GM13976 (cell line): ENCODE measurements at regions of chr14 and their contacts with region 1.

Region 1: DNA sequence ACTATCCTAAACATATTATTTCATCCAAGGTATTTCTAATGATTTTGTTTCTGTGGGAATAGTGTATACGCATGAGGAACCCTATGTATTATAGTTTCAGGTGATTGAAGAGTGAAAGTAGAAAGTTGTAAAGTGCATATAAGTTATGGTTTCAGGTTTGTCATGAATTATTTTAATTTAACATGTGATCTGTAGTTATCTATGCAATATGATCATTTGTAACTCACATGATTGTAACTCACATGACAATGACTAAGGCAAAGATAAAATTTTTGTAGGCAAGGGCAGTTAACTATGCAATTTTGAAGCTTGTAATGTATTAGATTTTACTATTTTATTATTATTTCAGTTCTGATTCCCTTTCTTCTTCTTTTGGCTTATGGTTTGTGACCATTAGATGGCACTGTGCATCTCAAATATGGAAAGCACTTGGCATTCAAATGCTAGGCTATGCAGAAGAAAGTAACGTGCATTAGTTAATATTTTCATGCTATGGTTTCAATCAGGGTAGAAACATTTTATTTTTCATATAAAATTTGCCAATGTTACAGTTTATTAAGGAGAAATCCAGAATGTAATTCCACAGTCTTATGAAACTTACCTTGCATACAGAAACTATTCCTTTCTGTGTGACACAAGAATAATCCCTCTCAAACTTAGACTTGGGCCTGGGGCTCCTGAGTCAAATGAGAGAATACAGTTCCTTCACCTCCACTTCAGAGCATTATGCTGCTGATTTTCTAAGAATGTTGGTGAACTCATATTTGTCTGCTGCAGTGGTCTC is 15.8 kb upstream of the TMEM30B start:
- DNase-seq: peak; percentile 54
- CTCF ChIP-seq: peak; percentile 45

Region 2: GRCh38 chr14:61003571-61003970 is 293.3 kb before region 1 on chr14:
- in situ Hi-C with region 1: no loop called
- DNase-seq: no peak
- CTCF ChIP-seq: no peak

Region 3: DNA sequence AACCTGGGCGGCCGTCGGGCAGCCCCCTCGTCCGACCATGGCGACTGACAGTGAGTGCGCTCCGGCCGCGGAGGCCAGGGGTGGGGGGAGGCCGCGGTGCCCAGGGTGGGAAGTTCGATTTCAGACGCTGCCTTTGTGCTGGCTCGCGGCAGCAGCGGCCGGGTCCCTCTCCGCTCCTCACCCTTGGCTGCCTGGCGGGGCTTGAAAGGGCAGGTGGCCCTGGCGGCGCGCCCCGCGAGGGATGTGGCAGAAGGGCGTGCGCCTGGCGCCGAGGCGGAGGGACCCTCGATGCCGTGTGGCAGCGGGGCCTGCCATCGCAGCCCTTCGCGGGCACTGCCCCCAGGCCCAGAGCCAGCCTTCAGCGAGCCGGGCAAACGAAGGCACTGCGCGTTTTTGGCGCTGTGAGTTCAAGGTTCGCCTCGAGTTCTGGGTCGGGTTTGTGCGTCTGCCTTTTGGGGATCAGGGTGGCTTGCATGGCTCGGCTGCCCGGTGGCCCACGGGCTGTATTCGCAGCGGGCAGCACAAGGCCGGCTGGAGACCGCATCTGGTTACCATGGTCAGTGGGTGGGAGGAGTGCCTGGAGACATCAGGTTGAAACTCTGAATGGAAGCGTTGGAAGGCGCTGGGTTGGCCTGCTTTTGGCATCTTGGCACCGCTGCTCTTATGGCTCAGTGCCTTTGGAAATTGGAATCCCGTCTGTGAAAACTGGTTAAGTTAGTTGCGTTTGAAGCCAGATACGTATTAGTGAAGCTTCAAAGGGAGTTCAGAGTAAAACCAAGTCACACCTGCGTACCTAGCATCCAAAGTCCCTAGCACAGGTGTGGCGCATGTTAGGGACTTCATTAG is 516.1 kb after region 1 on chr14:
- in situ Hi-C with region 1: no loop called
- DNase-seq: peak; percentile 50
- CTCF ChIP-seq: no peak

Region 4: GRCh38 chr14:61837336-61838229 is 540.7 kb after region 1 on chr14:
- in situ Hi-C with region 1: loop called (anchors 25 kb)
- DNase-seq: peak; percentile 66
- CTCF ChIP-seq: peak; percentile 91